GM12878 (cell line): ENCODE measurements at regions of chr16 and their contacts with region 1.

Region 1: GRCh38 chr16:58755989-58756649 is 22.0 kb upstream of the GOT2 start:
- DNase-seq: no peak
- ATAC-seq: peak; percentile 99
- H3K4me3 ChIP-seq: no peak overlapping the region
- H3K27ac ChIP-seq: no peak overlapping the region
- H3K4me1 ChIP-seq: peaks cover 3% of the 10 kb centered on the region; the same call in 1 of the 2 replicates
- H3K27me3 ChIP-seq: no peaks in the 10 kb centered on the region
- CTCF ChIP-seq: peak; percentile 76 to 89 (median 77)
- EP300 ChIP-seq: no peak
- POLR2A ChIP-seq: no peak
- RAD21 ChIP-seq: peak; percentile 93

Region 2: DNA sequence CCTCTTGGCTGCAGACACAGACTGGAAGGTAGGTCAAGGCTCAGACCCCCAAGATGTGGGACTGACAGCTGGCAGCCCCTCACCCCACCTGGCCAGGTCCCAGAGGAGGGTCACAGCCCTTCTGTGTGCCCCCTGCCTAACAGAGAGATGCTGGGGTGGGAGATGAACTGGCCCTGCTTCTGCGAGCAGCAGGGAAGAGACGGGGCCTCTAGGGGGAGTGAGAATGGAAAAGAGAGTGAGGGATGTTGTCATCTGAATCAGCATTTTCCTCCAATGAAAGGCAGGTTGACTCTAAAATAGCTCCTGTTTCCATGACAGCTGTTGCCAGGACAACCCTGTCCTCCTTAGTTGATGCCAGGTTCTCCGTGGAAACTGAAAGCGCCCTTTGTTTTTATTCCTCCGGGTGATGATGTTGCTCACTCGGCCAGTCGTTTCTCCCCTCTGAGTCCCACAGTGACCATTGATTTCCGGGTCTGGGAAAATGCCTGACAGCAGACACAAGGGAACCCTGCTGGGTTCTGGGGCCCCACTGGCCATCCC is 261.1 kb before region 1 on chr16:
- CTCF ChIA-PET with region 1: interaction called, 4 read pairs
- POLR2A ChIA-PET with region 1: no interaction called
- RAD21 ChIA-PET with region 1: interaction called, 6 read pairs
- SMC1A ChIA-PET with region 1: interaction called, 4 read pairs
- in situ Hi-C with region 1: no loop called
- intact Hi-C with region 1: loop called (anchors 5 kb)
- DNase-seq: peak; percentile 59
- ATAC-seq: peak; percentile 73
- H3K4me3 ChIP-seq: no peak overlapping the region
- H3K27ac ChIP-seq: no peak overlapping the region
- H3K4me1 ChIP-seq: peaks cover 21% of the 10 kb centered on the region
- H3K27me3 ChIP-seq: no peaks in the 10 kb centered on the region; a peak in 2 of 4 replicates
- CTCF ChIP-seq: peak; percentile 48 to 57 (median 52)
- EP300 ChIP-seq: no peak
- POLR2A ChIP-seq: no peak
- RAD21 ChIP-seq: 0 out of 2 replicates have a peak, but pooled peaks have one; percentile 9

Region 3: DNA sequence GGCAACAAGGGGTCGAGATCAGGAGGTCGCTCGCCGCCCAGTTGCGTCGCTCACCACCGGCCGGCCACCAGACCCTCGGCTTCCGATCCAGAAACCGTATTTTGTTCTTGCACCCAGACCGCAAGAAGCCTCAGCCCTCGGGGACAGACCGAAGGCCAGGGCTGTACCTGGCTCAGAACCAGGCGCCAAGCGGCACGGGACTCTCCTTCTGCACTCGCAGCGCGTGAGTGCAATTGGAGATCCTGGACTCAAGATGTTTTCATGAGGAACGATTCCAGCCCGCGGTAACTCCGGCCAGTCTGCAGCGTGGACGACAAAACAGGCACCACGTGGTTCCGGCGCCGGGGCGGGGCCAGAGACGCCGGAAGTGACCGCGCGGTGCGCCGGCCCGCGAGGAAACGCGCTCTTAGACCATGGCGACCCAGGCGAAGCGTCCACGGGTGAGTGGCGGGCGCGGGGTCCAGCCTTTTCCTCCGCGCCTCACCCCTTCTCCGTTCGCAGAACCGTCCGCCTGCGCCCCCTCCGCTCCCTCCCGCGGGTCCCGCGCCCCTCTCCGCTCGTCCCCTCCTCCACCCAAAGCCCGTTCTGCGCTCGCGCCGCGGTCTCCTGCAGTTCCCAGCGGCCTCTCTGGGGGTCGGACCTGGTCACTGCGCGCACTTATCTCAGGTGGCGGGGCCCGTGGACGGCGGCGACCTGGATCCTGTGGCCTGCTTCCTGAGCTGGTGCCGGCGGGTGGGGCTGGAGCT is 240.8 kb before region 1 on chr16 and contains the start of gene SETD6:
- CTCF ChIA-PET with region 1: interaction called, 18 read pairs
- POLR2A ChIA-PET with region 1: no interaction called
- RAD21 ChIA-PET with region 1: interaction called, 19 read pairs
- SMC1A ChIA-PET with region 1: interaction called, 7 read pairs
- in situ Hi-C with region 1: no loop called
- intact Hi-C with region 1: loop called (anchors 1 kb)
- DNase-seq: no peak
- ATAC-seq: peak; percentile 89
- H3K4me3 ChIP-seq: peak within 1 kb of the TSS; percentile 93
- H3K27ac ChIP-seq: peak within 1 kb of the TSS; percentile 54
- H3K4me1 ChIP-seq: peaks cover 37% of the 10 kb centered on the region
- H3K27me3 ChIP-seq: no peaks in the 10 kb centered on the region
- CTCF ChIP-seq: peak in 1 of 3 experiments; percentile 18; a peak in 1 of 6 replicates
- EP300 ChIP-seq: no peak
- POLR2A ChIP-seq: peak; percentile 84
- RAD21 ChIP-seq: no peak
- polyA plus RNA-seq, gene SETD6: 8.2 to 13.4 TPM

Region 4: DNA sequence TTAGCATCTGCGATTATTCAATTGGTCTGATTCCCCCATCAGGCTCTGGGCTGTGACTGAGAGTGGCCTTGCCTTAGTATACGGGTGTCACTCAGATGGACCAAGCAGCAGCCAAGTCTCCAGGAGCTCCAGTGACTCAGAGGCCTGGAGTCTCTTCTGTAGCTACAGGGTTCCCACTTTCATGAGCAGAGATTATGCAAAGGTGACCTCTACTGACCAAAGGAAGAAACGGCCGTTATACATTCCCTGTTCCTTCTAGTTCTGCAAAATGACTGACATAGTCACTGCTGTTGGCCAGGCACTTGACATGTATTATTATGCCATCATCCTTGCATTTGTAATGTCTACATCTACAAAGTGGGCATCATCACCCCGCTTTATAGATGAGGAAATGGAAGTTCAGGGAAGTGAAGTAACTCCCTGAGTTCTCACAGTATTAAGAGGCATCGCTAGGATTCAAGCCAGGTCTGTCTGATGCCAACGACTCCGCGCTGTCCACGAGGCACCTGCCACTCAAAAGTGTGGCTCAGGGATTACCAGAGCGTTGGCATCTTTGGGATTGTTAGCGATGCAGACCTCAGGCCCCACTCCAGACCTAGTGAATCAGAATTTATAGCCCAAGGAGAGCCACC is 94.8 kb before region 1 on chr16:
- CTCF ChIA-PET with region 1: interaction called, 6 read pairs
- POLR2A ChIA-PET with region 1: no interaction called
- RAD21 ChIA-PET with region 1: interaction called, 14 read pairs
- SMC1A ChIA-PET with region 1: interaction called, 6 read pairs
- in situ Hi-C with region 1: no loop called
- intact Hi-C with region 1: no loop called
- DNase-seq: no peak
- ATAC-seq: peak; percentile 96
- H3K4me3 ChIP-seq: no peak overlapping the region
- H3K27ac ChIP-seq: no peak overlapping the region
- H3K4me1 ChIP-seq: no peaks in the 10 kb centered on the region
- H3K27me3 ChIP-seq: no peaks in the 10 kb centered on the region
- CTCF ChIP-seq: peak; percentile 57 to 90 (median 70); a peak in 5 of 6 replicates
- EP300 ChIP-seq: no peak
- POLR2A ChIP-seq: no peak
- RAD21 ChIP-seq: peak; percentile 86

Region 5: GRCh38 chr16:58678716-58679115 is 77.4 kb before region 1 on chr16:
- CTCF ChIA-PET with region 1: interaction called, 26 read pairs
- POLR2A ChIA-PET with region 1: no interaction called
- RAD21 ChIA-PET with region 1: interaction called, 16 read pairs
- SMC1A ChIA-PET with region 1: interaction called, 9 read pairs
- in situ Hi-C with region 1: no loop called
- intact Hi-C with region 1: loop called (anchors 1 kb)
- DNase-seq: no peak
- ATAC-seq: peak; percentile 72
- H3K4me3 ChIP-seq: no peak overlapping the region
- H3K27ac ChIP-seq: no peak overlapping the region
- H3K4me1 ChIP-seq: peaks cover 4% of the 10 kb centered on the region; the same call in 1 of the 2 replicates
- H3K27me3 ChIP-seq: no peaks in the 10 kb centered on the region
- CTCF ChIP-seq: peak; percentile 18 to 44 (median 43); a peak in 2 of 6 replicates
- EP300 ChIP-seq: no peak
- POLR2A ChIP-seq: no peak
- RAD21 ChIP-seq: peak; percentile 43

Region 6: GRCh38 chr16:58684354-58685083 is 71.6 kb before region 1 on chr16 and contains the start of gene SLC38A7:
- CTCF ChIA-PET with region 1: interaction called, 26 read pairs
- POLR2A ChIA-PET with region 1: no interaction called
- RAD21 ChIA-PET with region 1: interaction called, 16 read pairs
- SMC1A ChIA-PET with region 1: interaction called, 9 read pairs
- in situ Hi-C with region 1: no loop called
- intact Hi-C with region 1: no loop called
- DNase-seq: no peak
- ATAC-seq: peak; percentile 99
- H3K4me3 ChIP-seq: peak within 1 kb of the TSS; percentile 74
- H3K27ac ChIP-seq: peak within 1 kb of the TSS; percentile 46
- H3K4me1 ChIP-seq: peaks cover 10% of the 10 kb centered on the region; the same call in 1 of the 2 replicates
- H3K27me3 ChIP-seq: no peaks in the 10 kb centered on the region
- CTCF ChIP-seq: no peak
- EP300 ChIP-seq: no peak
- POLR2A ChIP-seq: peak; percentile 46
- RAD21 ChIP-seq: no peak
- polyA plus RNA-seq, gene SLC38A7: 1.4 TPM

Region 7: DNA sequence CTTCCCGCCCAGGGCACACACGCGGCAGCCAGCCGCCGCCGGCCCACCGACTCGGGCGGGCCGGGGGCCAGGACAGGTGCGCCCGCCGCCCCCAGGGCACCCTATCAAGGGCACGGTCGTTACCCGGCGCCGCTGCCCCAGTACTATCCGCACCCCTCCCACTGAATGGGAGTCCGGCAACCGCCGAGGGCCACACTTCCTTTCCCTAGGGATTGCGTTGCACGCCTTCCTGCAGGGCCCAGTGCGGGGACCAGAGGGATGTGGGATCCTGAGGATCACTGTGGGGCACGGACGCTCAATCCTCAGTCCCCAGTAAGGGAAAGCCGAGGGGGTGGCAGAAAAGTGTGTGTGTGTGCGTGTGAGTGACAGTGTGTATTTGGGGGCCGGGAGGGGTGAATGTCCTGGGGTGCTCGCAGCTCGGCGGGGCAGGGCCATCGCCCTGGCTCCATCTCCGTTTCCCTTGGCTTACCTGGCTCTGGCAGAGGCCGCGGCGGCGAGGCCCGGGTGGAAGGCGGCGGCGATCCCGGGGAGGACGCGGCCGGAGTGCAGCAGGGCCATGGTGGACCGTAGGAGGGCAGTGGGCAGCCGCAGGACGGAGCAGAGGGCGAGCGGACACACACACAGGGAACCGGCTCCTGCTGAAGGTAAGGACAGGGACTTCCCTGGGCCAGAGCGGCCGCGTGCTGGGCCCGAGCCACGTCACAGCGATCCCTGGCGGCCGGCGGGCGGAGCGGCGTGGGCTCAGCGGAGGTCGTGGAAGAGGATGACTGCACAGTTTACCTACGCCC is 22.3 kb before region 1 on chr16 and contains the start of gene GOT2:
- CTCF ChIA-PET with region 1: interaction called, 11 read pairs
- POLR2A ChIA-PET with region 1: no interaction called
- RAD21 ChIA-PET with region 1: interaction called, 6 read pairs
- SMC1A ChIA-PET with region 1: interaction called, 3 read pairs
- in situ Hi-C with region 1: no loop called
- intact Hi-C with region 1: no loop called
- DNase-seq: peak; percentile 43
- ATAC-seq: peak; percentile 95
- H3K4me3 ChIP-seq: peak within 1 kb of the TSS; percentile 89
- H3K27ac ChIP-seq: peak within 1 kb of the TSS; percentile 64
- H3K4me1 ChIP-seq: peaks cover 7% of the 10 kb centered on the region
- H3K27me3 ChIP-seq: no peaks in the 10 kb centered on the region; a peak in 1 of 4 replicates
- CTCF ChIP-seq: peak; percentile 96 to 98 (median 98); a peak in 5 of 6 replicates
- EP300 ChIP-seq: no peak
- POLR2A ChIP-seq: peak; percentile 88
- RAD21 ChIP-seq: peak; percentile 24; the same call in 1 of the 2 replicates
- polyA plus RNA-seq, gene GOT2: 79.4 to 81.0 TPM

Region 8: GRCh38 chr16:58801838-58802237 is 45.7 kb after region 1 on chr16:
- CTCF ChIA-PET with region 1: no interaction called
- POLR2A ChIA-PET with region 1: no interaction called
- RAD21 ChIA-PET with region 1: no interaction called
- SMC1A ChIA-PET with region 1: no interaction called
- in situ Hi-C with region 1: no loop called
- intact Hi-C with region 1: no loop called
- DNase-seq: no peak
- ATAC-seq: no peak
- H3K4me3 ChIP-seq: no peak overlapping the region
- H3K27ac ChIP-seq: no peak overlapping the region
- H3K4me1 ChIP-seq: no peaks in the 10 kb centered on the region
- H3K27me3 ChIP-seq: no peaks in the 10 kb centered on the region
- CTCF ChIP-seq: no peak
- EP300 ChIP-seq: no peak
- POLR2A ChIP-seq: no peak
- RAD21 ChIP-seq: no peak